Activated CD8-positive, alpha-beta memory T cell treated with anti-CD3 and anti-CD28 coated beads, Interleukin-2, amount 10 ng/mL, durations not matched to agents 7 days and 5 days (primary cell): ENCODE measurements at regions of chr2 and their contacts with region 1.

Region 1: GRCh38 chr2:231713730-231714430 is 5.6 kb downstream of the PTMA start:
- DNase-seq: peak; percentile 94
- ATAC-seq: peak; percentile 29
- H3K4me3 Mint-ChIP-seq: peak overlapping the region; percentile 33
- H3K27ac Mint-ChIP-seq: peak overlapping the region; percentile 90
- H3K4me1 Mint-ChIP-seq: peaks cover 27% of the 10 kb centered on the region
- H3K27me3 Mint-ChIP-seq: no peaks in the 10 kb centered on the region

Region 2: DNA sequence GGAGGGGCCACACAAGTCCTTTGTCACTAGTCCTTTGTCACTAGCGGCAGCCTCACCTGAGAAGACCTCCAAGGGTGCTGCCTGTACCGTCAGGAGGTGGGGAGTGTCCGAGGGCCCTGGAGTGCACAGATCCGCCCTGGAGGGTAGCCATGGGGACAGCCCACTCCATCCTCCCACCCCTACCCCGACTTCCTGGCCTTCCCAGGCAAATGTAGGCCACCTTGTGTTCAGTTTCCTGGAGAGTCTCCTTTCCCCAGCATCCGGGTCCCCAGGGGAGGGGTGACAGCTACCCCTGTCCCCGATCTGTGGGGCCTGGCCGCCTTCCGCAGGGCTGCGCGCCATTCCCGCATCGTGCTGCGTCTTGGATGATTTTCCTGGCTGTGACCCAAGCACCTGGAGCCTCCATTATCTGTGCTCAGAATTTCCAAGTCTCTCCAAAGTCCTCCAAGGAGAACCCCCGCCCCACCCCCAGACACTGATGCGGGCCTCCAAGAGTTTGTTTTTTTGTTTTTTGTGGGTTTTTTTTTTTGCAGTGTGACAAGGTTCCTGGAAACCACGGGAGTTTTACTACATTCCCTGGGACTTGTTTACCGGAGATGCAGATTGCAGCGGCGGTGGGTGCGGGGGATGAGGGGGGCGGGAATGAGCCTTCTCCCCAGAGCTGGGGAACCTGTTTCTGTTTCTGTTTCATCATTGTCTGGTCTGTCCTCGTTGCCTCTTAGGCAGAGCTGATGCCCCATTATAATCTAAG is 92.6 kb before region 1 on chr2:
- CTCF ChIA-PET with region 1: interaction called, 10 read pairs
- DNase-seq: no peak
- ATAC-seq: peak; percentile 68
- H3K4me3 Mint-ChIP-seq: no peak overlapping the region
- H3K27ac Mint-ChIP-seq: no peak overlapping the region
- H3K4me1 Mint-ChIP-seq: peaks cover 16% of the 10 kb centered on the region
- H3K27me3 Mint-ChIP-seq: no peaks in the 10 kb centered on the region

Region 3: GRCh38 chr2:231662028-231662810 is 51.7 kb before region 1 on chr2:
- CTCF ChIA-PET with region 1: interaction called, 19 read pairs
- DNase-seq: peak; percentile 97
- ATAC-seq: peak; percentile 95
- H3K4me3 Mint-ChIP-seq: peak overlapping the region; percentile 69
- H3K27ac Mint-ChIP-seq: peak overlapping the region; percentile 94
- H3K4me1 Mint-ChIP-seq: peaks cover 15% of the 10 kb centered on the region
- H3K27me3 Mint-ChIP-seq: no peaks in the 10 kb centered on the region

Region 4: DNA sequence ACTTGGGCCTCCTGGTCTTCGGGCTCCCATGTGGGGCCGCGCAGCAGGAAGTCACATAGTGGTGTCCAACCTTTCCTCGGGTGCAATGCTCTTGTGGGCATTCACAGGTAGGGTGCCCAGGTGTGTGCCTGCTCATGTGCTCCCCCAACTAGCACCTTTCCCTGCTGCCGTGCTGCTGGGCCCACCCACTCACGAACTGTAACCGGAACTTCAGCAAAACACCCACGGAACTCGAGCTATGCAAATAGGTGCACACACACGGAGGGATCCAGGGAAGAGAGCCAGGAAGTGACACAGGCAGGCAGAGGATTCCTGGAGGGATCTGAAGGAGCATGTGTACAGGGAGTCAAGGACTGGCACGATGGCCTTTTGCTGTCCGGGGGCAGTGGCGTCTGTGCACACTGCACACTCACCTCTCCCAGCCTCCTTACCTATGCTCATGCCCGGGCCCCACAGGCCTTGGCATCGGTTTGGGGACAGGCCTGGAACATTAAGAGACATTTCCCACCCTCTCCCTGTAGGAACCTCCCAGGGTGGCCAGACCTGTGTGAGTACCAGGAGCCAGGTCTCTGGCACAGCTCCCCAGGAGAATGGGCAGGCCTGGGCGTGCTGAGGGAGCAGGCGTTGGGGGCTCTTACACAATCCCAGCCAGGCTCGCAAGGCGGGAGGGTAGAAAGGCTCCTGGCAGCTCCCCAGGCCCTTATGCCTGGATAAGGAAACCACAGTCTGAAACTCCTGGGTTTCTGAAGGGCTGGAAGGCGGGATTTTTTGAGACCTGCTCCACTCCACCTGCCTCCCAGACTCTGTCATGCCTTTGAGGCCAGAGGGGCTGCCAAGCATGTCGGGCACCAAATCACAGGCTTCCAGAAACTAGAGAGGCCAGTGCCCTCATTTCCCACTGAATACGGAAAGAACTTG is 12.2 kb before region 1 on chr2:
- CTCF ChIA-PET with region 1: interaction called, 53 read pairs
- DNase-seq: no peak
- ATAC-seq: no peak
- H3K4me3 Mint-ChIP-seq: no peak overlapping the region
- H3K27ac Mint-ChIP-seq: no peak overlapping the region
- H3K4me1 Mint-ChIP-seq: peaks cover 11% of the 10 kb centered on the region
- H3K27me3 Mint-ChIP-seq: no peaks in the 10 kb centered on the region